Ascending aorta (tissue), 2 donors: ENCODE measurements at regions of chr3 and their contacts with region 1.

Region 1: GRCh38 chr3:16290007-16290826 is 25.2 kb downstream of the OXNAD1 start:
- DNase-seq: no peak
- H3K4me3 ChIP-seq: no peak overlapping the region
- H3K27ac ChIP-seq: no peak overlapping the region
- H3K4me1 ChIP-seq: peaks cover 0 to 12% of the 10 kb centered on the region in 2 donors
- H3K27me3 ChIP-seq: no peaks in the 10 kb centered on the region
- CTCF ChIP-seq: peak; percentile 63 to 92 (median 74)

Region 2: DNA sequence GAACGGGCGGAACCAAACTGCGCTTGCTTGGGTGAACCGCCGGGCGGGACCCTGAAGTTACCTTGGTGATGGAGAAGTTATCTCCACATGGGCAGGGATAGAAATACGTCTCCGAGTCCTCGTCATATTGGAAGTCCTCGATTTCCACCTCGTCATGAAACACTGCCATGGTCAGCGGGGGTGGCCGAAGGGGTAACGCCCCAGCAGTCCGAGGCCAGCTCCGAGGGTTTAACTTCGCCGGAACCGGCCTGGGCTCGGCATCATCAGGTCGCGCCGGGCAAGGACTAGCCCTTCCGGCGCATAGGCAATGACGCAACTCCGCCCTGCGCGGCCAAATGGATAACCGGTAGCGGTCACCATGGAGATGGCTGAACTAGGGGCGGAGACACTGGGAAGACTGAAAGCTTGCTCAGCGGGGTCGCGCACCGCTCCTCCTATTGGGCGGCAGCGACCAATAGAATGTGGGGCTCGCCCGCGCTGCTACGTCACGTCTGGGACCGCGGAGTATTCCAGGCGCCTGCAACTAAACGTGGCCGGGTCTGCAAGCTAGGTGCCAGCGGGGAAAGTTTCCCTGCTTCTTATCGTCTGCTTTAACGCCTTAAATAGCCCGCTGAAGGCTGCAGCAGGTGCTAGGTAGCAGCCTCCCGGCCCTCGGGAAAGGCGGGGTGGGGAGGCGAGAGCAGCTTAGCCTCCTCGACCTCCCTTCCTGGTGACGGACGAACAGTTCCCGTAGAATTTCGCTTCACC is 25.3 kb before region 1 on chr3 and contains the starts of genes DPH3 and OXNAD1:
- intact Hi-C with region 1: loop called (anchors 2 kb)
- DNase-seq: peak; percentile 99 to 100
- H3K4me3 ChIP-seq: peak within 1 kb of the TSS; percentile 65 to 84
- H3K27ac ChIP-seq: peak within 1 kb of the TSS; percentile 81 to 88
- H3K4me1 ChIP-seq: peaks cover 0 to 25% of the 10 kb centered on the region in 2 donors
- H3K27me3 ChIP-seq: no peaks in the 10 kb centered on the region
- CTCF ChIP-seq: peak in 1 of 3 experiments; percentile 16
- total RNA-seq, gene DPH3: 5.5 TPM
- total RNA-seq, gene OXNAD1: 6.9 TPM

Region 3: GRCh38 chr3:16550676-16551341 is 260.6 kb after region 1 on chr3:
- intact Hi-C with region 1: loop called (anchors 1 kb)
- DNase-seq: peak in 1 of 2 donors; percentile 89
- H3K4me3 ChIP-seq: peak overlapping the region in 1 of 2 donors; percentile 40
- H3K27ac ChIP-seq: no peak overlapping the region
- H3K4me1 ChIP-seq: no peaks in the 10 kb centered on the region
- H3K27me3 ChIP-seq: no peaks in the 10 kb centered on the region
- CTCF ChIP-seq: peak; percentile 84 to 88 (median 87)